Activated B cell treated with CpG ODN at 0.5 μM for 24 hours (primary cell): ENCODE measurements at regions of chr16 and their contacts with region 1.

Region 1: GRCh38 chr16:53435066-53435688 is 906 bp downstream of the RBL2 start:
- DNase-seq: peak; percentile 52
- ATAC-seq: peak; percentile 67
- H3K4me3 Mint-ChIP-seq: peak overlapping the region; percentile 89
- H3K27ac Mint-ChIP-seq: peak overlapping the region; percentile 93
- H3K4me1 Mint-ChIP-seq: peaks cover 34% of the 10 kb centered on the region
- H3K27me3 Mint-ChIP-seq: no peaks in the 10 kb centered on the region
- CTCF ChIP-seq: no peak

Region 2: DNA sequence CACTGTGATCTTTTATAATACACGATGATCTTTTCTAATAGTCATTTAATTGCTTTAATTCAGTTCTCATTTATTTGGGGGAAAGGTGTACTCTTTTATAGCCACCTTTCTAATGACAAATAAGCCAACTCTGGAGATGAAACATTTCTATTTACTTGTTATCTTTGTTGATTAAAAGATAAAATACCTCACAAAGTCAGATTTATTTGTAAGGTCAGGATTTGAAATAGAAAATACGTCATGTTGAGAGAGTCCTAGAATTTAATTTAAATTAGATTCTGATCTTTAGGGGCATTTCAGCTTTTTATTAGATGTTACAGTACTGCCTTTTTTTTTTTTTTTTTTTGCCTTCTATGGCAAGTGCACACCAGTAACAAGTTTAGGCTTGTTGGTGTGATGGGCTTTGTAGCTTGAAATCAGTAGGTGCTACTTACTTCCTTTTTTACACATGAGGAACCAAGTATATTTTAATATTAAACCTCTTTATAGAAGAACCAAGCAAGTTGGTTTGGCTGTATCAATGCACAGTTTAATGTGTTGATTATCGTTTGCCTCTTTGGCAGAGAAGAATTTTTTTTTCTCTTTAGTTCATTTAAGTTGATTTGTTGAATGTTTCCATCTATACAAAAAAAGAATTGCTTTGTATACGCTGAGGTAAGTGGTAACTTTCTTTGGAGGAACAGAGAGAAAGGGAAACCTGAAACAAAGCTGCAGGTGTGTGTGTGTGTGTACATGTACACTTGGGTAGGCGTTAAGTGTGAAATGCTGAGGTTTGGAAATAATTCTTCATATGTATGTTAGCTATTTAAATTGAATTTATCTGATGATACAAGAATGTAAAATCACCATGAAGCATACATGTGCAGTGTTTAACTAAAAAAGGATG is 14.7 kb after region 1 on chr16:
- CTCF ChIA-PET with region 1: no interaction called
- POLR2A ChIA-PET with region 1: interaction called, 15 read pairs
- intact Hi-C with region 1: loop called (anchors 2 kb)
- DNase-seq: no peak
- ATAC-seq: peak; percentile 74
- H3K4me3 Mint-ChIP-seq: peak overlapping the region; percentile 32
- H3K27ac Mint-ChIP-seq: peak overlapping the region; percentile 68
- H3K4me1 Mint-ChIP-seq: peaks cover 14% of the 10 kb centered on the region
- H3K27me3 Mint-ChIP-seq: no peaks in the 10 kb centered on the region
- CTCF ChIP-seq: no peak

Region 3: GRCh38 chr16:53457670-53458069 is 22.5 kb after region 1 on chr16:
- CTCF ChIA-PET with region 1: no interaction called
- POLR2A ChIA-PET with region 1: interaction called, 12 read pairs
- intact Hi-C with region 1: no loop called
- DNase-seq: no peak
- ATAC-seq: peak; percentile 92
- H3K4me3 Mint-ChIP-seq: peak overlapping the region; percentile 50
- H3K27ac Mint-ChIP-seq: peak overlapping the region; percentile 57
- H3K4me1 Mint-ChIP-seq: peaks cover 28% of the 10 kb centered on the region
- H3K27me3 Mint-ChIP-seq: no peaks in the 10 kb centered on the region
- CTCF ChIP-seq: no peak

Region 4: DNA sequence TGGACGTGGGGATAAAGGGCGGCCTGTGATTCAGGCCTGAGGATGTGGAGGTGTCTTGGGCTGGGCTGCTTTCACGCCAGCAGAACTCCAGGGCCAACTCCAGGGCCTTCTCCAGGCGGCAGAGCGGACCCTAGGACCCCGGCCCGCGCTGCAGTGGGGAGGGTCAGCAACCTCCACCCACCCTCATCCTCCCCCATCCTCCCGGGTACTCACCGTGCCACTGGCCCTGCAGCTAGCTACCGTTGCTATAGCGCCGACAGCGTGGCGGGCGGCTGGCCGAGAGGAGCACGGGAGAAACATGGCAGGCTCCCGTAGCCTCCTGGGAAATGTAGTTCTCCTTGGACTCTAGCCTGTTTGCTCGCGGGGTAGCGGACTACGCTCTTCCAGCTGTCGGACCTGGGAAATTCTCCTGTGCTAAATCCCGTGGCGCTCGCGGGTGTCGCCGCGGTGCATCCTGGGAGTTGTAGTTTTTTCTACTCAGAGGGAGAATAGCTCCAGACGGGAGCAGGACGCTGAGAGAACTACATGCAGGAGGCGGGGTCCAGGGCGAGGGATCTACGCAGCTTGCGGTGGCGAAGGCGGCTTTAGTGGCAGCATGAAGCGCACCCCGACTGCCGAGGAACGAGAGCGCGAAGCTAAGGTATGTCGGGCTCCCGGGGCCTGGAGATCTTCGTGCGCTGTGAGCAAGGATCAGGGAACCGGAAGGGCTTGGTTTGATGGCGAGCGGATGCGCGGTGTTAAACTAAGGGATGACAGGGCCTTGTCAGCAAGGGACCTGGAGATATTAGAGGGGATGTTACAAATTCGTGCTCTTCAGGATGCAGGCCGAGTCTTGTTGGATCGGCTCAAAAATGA is 268.6 kb after region 1 on chr16 and contains the starts of genes FTO and RPGRIP1L:
- CTCF ChIA-PET with region 1: no interaction called
- POLR2A ChIA-PET with region 1: interaction called, 8 read pairs
- intact Hi-C with region 1: loop called (anchors 1 kb)
- DNase-seq: peak; percentile 91
- ATAC-seq: peak; percentile 96
- H3K4me3 Mint-ChIP-seq: peak within 1 kb of the TSS; percentile 96
- H3K27ac Mint-ChIP-seq: peak within 1 kb of the TSS; percentile 90
- H3K4me1 Mint-ChIP-seq: peaks cover 27% of the 10 kb centered on the region
- H3K27me3 Mint-ChIP-seq: no peaks in the 10 kb centered on the region
- CTCF ChIP-seq: no peak
- total RNA-seq, gene FTO: 59.7 and 65.8 TPM in 2 replicates
- total RNA-seq, gene RPGRIP1L: 5.0 and 5.8 TPM in 2 replicates

Region 5: GRCh38 chr16:54929090-54930004 is 1494.2 kb after region 1 on chr16:
- CTCF ChIA-PET with region 1: no interaction called
- POLR2A ChIA-PET with region 1: no interaction called
- intact Hi-C with region 1: loop called (anchors 10 kb)
- DNase-seq: peak; percentile 89
- ATAC-seq: peak; percentile 95
- H3K4me3 Mint-ChIP-seq: peak overlapping the region; percentile 88
- H3K27ac Mint-ChIP-seq: peak overlapping the region; percentile 43
- H3K4me1 Mint-ChIP-seq: peaks cover 31% of the 10 kb centered on the region
- H3K27me3 Mint-ChIP-seq: peaks cover 53% of the 10 kb centered on the region
- CTCF ChIP-seq: no peak